Panc1 (cell line): ENCODE measurements at regions of chr18 and their contacts with region 1.

Region 1: DNA sequence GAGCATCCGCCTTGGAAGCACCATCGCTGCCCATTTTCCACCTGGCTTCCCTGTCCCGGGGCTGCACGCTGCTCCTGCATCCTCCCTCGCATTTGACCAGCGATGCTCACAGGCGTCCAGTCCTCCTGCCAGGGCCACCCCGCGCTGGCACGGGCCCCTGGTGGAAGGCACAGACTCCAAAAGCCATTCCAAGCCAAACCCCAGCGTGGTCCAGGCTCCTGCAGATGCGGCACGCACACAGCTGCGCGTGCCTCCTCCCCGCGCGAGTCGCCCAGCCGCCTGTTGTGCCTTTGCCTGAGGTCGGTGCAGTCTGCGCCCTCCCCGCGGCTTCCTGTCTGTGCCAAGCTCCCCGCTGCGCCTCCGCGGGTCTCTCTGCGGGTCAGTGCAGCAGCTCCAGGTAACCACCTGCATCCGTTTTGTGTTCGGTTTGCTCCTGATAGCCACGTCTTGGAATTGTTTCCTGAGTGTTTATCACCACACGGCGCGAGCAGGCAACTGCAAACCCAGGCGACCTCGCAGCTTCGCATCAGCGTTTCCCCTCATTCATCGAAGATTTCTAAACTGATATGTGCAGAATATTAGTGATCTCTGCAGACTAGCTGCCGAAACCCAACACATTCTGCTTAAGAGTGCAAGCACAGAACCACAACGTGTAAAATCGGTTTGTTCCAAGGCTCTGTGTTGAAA is 65.2 kb upstream of the SALL3 start:
- DNase-seq: no peak
- ATAC-seq: no peak
- H3K4me3 ChIP-seq: no peak overlapping the region
- H3K27ac ChIP-seq: no peak overlapping the region
- H3K4me1 ChIP-seq: no peaks in the 10 kb centered on the region
- H3K27me3 ChIP-seq: peaks cover 2% of the 10 kb centered on the region; the same call in 1 of the 2 replicates
- CTCF ChIP-seq: no peak

Region 2: DNA sequence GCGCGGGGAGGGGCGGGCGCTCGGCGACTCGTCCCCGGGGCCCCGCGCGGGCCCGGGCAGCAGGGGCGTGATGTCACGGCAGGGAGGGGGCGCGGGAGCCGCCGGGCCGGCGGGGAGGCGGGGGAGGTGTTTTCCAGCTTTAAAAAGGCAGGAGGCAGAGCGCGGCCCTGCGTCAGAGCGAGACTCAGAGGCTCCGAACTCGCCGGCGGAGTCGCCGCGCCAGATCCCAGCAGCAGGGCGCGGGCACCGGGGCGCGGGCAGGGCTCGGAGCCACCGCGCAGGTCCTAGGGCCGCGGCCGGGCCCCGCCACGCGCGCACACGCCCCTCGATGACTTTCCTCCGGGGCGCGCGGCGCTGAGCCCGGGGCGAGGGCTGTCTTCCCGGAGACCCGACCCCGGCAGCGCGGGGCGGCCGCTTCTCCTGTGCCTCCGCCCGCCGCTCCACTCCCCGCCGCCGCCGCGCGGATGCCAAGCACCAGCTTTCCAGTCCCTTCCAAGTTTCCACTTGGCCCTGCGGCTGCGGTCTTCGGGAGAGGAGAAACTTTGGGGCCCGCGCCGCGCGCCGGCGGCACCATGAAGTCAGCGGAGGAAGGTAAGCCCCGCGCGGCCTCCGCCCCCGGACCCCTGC is 481.5 kb after region 1 on chr18 and contains the start of gene NFATC1:
- CTCF ChIA-PET with region 1: no interaction called
- POLR2A ChIA-PET with region 1: interaction called, 11 read pairs
- in situ Hi-C with region 1: no loop called
- intact Hi-C with region 1: no loop called
- DNase-seq: no peak
- ATAC-seq: peak; percentile 55
- H3K4me3 ChIP-seq: peak within 1 kb of the TSS; percentile 59 to 70
- H3K27ac ChIP-seq: peak within 1 kb of the TSS; percentile 69
- H3K4me1 ChIP-seq: peaks cover 25% of the 10 kb centered on the region
- H3K27me3 ChIP-seq: no peaks in the 10 kb centered on the region
- CTCF ChIP-seq: no peak
- total RNA-seq, gene NFATC1: 30.8 TPM